Dendritic cell treated with granulocyte-macrophage colony-stimulating factor and Interleukin-4, amounts not matched to agents 40 ng/mL and 50 ng/mL, for 4 days (primary cell): ENCODE measurements at regions of chr1 and their contacts with region 1.

Region 1: GRCh38 chr1:165697881-165698760 is at the start of gene ALDH9A1:
- H3K4me3 Mint-ChIP-seq: peak within 1 kb of the TSS; percentile 95
- H3K27ac Mint-ChIP-seq: peak within 1 kb of the TSS; percentile 98
- H3K4me1 Mint-ChIP-seq: peaks cover 17% of the 10 kb centered on the region
- H3K27me3 Mint-ChIP-seq: no peaks in the 10 kb centered on the region

Region 2: DNA sequence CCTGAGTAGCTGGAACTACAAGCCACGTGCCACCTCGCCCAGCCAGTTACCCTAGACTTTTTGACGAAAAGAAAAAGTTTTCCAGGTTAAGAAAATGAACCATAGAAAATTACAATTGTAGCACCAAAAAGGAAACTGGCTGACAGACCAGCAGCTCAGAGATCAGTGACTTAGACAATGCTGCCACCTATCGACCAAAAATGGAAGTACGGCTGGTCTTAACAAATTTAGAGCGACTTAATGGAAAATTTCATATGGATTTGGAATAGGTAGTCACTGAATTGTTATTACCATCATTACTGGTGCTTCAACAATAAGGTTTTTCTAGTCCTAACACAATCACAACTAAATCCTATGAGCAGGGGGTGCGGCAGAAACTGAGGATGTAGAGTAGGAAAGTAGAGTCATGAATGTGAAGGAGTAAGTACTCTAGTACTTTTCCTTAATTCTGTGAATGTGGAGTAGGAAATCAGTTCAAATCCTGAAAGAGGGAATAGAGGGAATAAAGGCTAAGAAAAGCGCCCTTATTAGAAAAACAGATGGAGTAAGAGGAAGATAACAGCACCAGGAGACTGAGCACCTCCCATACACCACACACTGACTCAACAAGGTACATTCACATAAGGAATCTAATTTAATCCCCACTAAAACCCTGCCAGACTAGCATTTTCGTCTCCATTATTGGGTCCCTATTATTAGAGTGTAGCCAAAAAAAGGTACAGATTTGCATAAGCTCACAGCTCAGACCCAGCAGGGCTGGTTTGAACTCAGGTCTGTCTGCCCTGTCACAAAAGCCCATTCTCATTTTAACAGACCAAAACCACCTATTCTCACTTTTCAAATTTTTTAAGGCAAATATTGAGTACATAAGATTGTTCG is 104.9 kb before region 1 on chr1:
- intact Hi-C with region 1: no loop called
- H3K4me3 Mint-ChIP-seq: no peak overlapping the region
- H3K27ac Mint-ChIP-seq: no peak overlapping the region
- H3K4me1 Mint-ChIP-seq: peaks cover 19% of the 10 kb centered on the region
- H3K27me3 Mint-ChIP-seq: peaks cover 77% of the 10 kb centered on the region

Region 3: GRCh38 chr1:165630629-165631341 is 67.3 kb before region 1 on chr1 and contains the start of gene MGST3:
- intact Hi-C with region 1: loop called (anchors 5 kb)
- H3K4me3 Mint-ChIP-seq: no peak within 1 kb of the TSS
- H3K27ac Mint-ChIP-seq: no peak within 1 kb of the TSS
- H3K4me1 Mint-ChIP-seq: peaks cover 22% of the 10 kb centered on the region
- H3K27me3 Mint-ChIP-seq: no peaks in the 10 kb centered on the region

Region 4: DNA sequence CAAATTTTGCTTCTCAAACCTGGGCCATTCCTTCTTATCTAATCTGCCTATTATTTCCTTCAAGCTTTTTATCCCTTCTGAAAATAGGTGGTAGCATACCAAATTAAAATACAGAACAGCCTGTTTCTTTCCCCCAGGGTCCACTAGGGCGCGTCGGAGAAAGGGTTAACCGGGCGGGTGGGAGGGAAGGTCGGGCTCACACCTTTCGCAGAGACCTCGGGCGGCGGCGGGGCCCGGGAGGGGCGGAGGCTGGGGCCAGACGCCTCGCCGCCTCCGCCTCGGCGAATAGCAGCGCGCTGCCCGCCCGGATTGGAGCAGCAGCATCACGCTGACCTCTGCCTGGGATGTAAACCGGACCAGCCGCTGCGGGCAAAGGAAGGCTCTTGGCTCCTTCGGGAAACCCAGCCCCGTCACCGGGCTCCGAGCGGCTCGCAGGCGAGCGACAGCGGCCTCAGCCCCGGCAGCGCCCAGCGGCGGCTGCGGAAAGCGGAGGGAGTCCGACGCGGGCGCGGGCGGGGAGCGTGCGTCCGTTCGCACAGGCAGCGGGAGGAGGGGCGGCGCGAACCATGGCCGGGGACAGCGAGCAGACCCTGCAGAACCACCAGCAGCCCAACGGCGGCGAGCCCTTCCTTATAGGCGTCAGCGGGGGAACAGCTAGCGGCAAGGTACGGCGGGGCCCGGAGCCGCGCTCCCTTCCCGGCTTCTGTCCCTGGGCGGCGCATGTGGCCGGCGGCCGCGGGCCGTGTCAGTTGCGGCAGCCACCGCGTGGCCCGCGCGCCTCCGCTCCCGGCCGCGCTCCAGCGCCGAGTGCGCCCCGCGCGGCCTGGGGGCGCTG is 129.4 kb after region 1 on chr1 and contains the start of gene UCK2:
- intact Hi-C with region 1: loop called (anchors 5 kb)
- H3K4me3 Mint-ChIP-seq: peak within 1 kb of the TSS; percentile 99
- H3K27ac Mint-ChIP-seq: peak within 1 kb of the TSS; percentile 87
- H3K4me1 Mint-ChIP-seq: peaks cover 15% of the 10 kb centered on the region
- H3K27me3 Mint-ChIP-seq: no peaks in the 10 kb centered on the region